ENCODE measurements at regions of chr19 and their contacts with region 1.

Region 1: DNA sequence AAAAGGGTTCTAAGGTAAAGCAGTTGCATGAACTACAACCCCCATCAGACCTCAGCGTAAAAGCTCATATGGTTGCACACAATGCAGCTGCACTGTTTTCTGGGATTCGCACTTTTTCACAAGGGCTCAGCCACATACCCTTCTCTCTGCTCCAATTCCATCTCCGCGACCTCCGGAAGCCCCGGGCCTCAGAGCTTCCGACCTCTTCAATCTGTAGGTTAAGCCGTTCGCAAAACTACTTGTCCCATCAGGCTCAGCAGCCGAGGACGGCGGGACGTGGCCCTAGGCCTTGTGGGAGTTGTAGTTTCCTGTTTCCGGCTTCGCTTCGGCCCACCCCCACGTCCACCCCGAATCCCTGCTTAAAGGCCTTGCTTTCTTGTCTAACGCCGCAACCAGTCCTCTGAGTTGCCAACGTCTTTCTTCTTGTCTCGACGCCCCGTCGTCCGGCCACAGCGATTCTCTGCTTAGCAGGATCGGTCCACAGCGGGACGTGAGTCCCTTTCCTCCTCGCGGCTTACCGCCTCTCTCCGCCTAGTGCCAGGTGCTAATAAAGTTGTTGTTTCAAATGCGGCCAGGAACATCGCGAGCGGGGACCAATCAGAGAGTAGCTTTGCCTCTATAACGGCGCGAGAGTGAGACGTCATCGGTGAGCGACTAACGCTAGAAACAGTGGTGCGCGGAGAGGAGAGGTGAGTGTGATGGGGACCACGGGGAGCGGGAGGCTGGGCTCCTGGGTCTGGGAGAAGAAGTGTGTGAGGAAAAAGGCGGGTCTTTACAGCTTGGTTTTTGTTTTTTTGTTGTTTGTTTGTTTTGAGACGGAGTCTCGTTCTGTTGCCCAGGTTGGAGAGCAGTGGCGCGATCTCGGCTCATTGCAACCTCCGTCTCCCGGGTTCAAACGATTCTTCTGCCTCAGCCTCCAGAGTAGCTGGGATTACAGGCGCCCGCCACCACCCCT is at the starts of genes PRPF31 and TFPT:
- DNase-seq: peak; percentile 90 to 99 (median 97)
- ATAC-seq: peak; percentile 87
- H3K4me3 ChIP-seq: peak within 1 kb of the TSS; percentile 77 to 81
- H3K4me3 Mint-ChIP-seq: peak within 1 kb of the TSS; percentile 91
- H3K27ac ChIP-seq: peak within 1 kb of the TSS; percentile 64 to 89
- H3K27ac Mint-ChIP-seq: peak within 1 kb of the TSS; percentile 90
- H3K4me1 ChIP-seq: peaks cover 22% of the 10 kb centered on the region
- H3K4me1 Mint-ChIP-seq: peaks cover 40% of the 10 kb centered on the region
- H3K27me3 ChIP-seq: no peaks in the 10 kb centered on the region
- H3K27me3 Mint-ChIP-seq: no peaks in the 10 kb centered on the region
- CTCF ChIP-seq: no peak
- total RNA-seq, gene PRPF31: 60.0 to 66.8 TPM
- total RNA-seq, gene TFPT: 7.8 to 8.2 TPM

Region 2: DNA sequence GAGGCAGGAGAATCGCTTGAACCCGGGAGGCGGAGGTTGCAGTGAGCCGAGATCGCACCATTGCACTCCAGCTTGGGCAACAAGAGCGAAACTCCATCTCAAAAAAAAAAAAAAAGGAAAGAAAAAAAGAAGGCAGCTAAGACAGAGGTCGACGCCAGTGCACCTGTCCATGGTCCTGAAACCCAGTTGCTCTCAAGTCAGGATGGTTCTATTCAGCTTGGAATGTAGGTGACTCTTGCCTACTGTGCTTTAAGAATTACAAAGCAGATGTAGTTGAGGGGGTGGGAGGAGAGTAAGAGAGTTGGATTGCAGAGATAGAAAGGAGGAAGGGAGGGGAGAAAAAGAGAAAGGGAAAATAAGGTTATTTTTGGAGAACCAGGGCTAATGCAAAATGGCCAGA is 187.6 kb before region 1 on chr19:
- CTCF ChIA-PET with region 1: no interaction called
- POLR2A ChIA-PET with region 1: no interaction called
- intact Hi-C with region 1: no loop called
- DNase-seq: peak in 7 of 9 experiments; percentile 3 to 64 (median 43)
- ATAC-seq: no peak
- H3K4me3 ChIP-seq: no peak overlapping the region
- H3K4me3 Mint-ChIP-seq: no peak overlapping the region
- H3K27ac ChIP-seq: no peak overlapping the region
- H3K27ac Mint-ChIP-seq: no peak overlapping the region
- H3K4me1 ChIP-seq: no peaks in the 10 kb centered on the region
- H3K4me1 Mint-ChIP-seq: no peaks in the 10 kb centered on the region
- H3K27me3 ChIP-seq: peaks cover 0 to 2% of the 10 kb centered on the region in 2 experiments
- H3K27me3 Mint-ChIP-seq: peaks cover 13% of the 10 kb centered on the region
- CTCF ChIP-seq: no peak

Region 3: DNA sequence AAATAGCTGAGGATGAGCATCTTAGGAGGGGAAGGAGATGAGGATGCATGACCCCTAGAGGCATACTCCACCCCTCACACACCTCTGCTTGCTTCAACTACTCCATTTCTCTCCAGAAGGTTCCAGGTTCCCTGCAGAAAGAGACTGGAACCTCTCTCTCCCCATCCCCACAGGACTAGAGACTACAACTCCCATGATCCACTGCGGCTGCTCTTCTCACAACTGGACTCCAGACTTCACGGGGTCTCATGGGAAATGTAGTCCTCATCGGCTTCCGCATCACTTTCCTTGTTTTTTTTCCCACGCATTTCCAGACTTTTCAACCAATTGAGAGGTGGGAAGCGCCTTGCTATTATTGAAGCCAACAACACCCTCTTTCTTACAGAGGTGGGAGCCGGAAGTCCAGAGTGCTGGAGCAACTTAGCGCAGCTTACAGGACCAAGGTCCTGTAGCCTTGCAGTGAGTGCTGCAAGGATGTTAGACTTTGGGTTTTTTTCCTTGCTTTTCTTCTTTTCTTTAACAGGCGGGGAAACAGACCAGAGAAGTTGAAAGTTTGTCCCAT is 137.9 kb before region 1 on chr19:
- CTCF ChIA-PET with region 1: no interaction called
- POLR2A ChIA-PET with region 1: no interaction called
- intact Hi-C with region 1: no loop called
- DNase-seq: peak in 8 of 9 experiments; percentile 31 to 83 (median 68)
- ATAC-seq: peak; percentile 88
- H3K4me3 ChIP-seq: peak overlapping the region; percentile 41 to 60
- H3K4me3 Mint-ChIP-seq: peak overlapping the region; percentile 73
- H3K27ac ChIP-seq: no peak overlapping the region
- H3K27ac Mint-ChIP-seq: no peak overlapping the region
- H3K4me1 ChIP-seq: peaks cover 26% of the 10 kb centered on the region
- H3K4me1 Mint-ChIP-seq: peaks cover 29% of the 10 kb centered on the region
- H3K27me3 ChIP-seq: peaks cover 31 to 35% of the 10 kb centered on the region in 2 experiments
- H3K27me3 Mint-ChIP-seq: peaks cover 54% of the 10 kb centered on the region
- CTCF ChIP-seq: no peak

Region 4: GRCh38 chr19:54102421-54103169 is 12.8 kb before region 1 on chr19 and contains the start of gene NDUFA3:
- CTCF ChIA-PET with region 1: no interaction called
- POLR2A ChIA-PET with region 1: interaction called, 28 read pairs
- intact Hi-C with region 1: loop called (anchors 1 kb)
- DNase-seq: peak; percentile 94 to 100 (median 98)
- ATAC-seq: peak; percentile 99
- H3K4me3 ChIP-seq: peak within 1 kb of the TSS; percentile 66 to 81
- H3K4me3 Mint-ChIP-seq: peak within 1 kb of the TSS; percentile 99
- H3K27ac ChIP-seq: peak within 1 kb of the TSS; percentile 58 to 84
- H3K27ac Mint-ChIP-seq: peak within 1 kb of the TSS; percentile 96
- H3K4me1 ChIP-seq: peaks cover 10% of the 10 kb centered on the region
- H3K4me1 Mint-ChIP-seq: peaks cover 35% of the 10 kb centered on the region
- H3K27me3 ChIP-seq: no peaks in the 10 kb centered on the region
- H3K27me3 Mint-ChIP-seq: no peaks in the 10 kb centered on the region
- CTCF ChIP-seq: no peak
- total RNA-seq, gene NDUFA3: 51.8 to 66.8 TPM

Region 5: DNA sequence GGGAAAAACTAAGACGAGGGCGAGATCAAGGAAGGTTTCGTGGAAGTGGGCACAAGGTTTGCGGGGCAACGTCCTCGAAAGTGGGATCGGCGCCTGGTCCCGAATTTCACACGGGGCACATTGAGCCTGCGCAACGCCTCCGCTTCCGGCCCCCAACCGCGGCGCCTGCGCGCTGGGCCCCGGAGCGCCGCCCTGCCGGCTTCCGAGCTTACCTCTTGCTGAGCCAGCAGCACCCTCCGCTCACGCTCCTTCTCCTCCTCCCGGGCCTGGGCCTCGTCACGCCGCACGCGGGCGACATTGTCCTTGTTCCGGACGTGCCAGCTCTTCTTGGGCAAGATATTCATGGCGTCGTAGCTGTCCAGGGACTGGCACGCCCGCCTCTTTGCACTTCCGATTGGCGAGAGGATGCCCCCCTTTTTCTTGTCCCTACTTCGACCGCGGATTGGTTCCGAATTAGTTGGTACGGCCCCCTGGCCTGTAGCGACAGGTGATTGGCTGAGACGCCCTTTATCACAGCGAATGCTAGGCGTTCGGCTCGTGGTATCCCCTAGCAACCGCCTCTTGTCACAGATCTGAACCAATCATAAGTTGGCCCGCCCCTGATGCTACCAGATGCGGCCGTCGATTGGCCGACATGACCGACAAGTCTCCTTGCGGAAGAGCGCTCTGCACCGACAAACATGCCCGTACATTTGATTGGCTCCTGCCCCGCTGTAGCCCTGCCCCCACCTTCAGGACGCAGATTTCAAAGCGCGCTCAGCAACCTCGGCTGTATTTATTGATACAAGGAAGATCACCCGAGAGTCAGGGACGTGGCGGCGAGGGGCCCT is 44.2 kb after region 1 on chr19 and contains the start of gene LENG1:
- CTCF ChIA-PET with region 1: no interaction called
- POLR2A ChIA-PET with region 1: interaction called, 21 read pairs
- intact Hi-C with region 1: loop called (anchors 1 kb)
- DNase-seq: peak; percentile 96 to 100 (median 98)
- ATAC-seq: peak; percentile 84
- H3K4me3 ChIP-seq: peak within 1 kb of the TSS; percentile 71 to 75
- H3K4me3 Mint-ChIP-seq: peak within 1 kb of the TSS; percentile 99
- H3K27ac ChIP-seq: peak within 1 kb of the TSS; percentile 79 to 87
- H3K27ac Mint-ChIP-seq: peak within 1 kb of the TSS; percentile 99
- H3K4me1 ChIP-seq: peaks cover 67% of the 10 kb centered on the region
- H3K4me1 Mint-ChIP-seq: peaks cover 59% of the 10 kb centered on the region
- H3K27me3 ChIP-seq: peaks cover 0 to 2% of the 10 kb centered on the region in 2 experiments
- H3K27me3 Mint-ChIP-seq: peaks cover 2% of the 10 kb centered on the region
- CTCF ChIP-seq: no peak
- total RNA-seq, gene LENG1: 15.5 to 15.8 TPM

Measured in CD8-positive, alpha-beta T cell (primary cell).